CD4-positive, alpha-beta memory T cell (primary cell): ENCODE measurements at regions of chr3 and their contacts with region 1.

Region 1: DNA sequence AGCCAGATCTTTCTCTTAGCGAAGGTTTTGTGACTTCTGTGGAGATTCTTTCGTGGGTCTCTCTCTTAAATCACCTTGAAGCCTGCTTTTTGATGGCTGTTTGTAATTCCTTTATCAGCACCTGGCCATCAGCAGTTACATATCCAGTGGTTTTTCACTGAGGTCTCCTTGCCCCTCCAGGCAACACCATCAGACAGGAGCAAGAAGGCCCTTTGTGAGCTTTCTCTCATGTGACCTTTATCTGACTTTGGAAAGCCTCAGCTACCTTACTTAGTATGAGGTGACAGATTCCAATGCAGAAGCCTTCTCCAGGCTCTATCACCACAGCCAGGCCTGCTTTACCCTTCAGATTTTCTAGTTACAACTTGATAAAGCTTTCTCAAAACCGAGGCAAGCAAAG is 30.0 kb upstream of the P3H2 start:
- DNase-seq: no peak
- H3K4me3 ChIP-seq: no peak overlapping the region
- H3K4me3 Mint-ChIP-seq: no peak overlapping the region
- H3K27ac ChIP-seq: no peak overlapping the region
- H3K27ac Mint-ChIP-seq: no peak overlapping the region
- H3K4me1 ChIP-seq: no peaks in the 10 kb centered on the region
- H3K4me1 Mint-ChIP-seq: no peaks in the 10 kb centered on the region
- H3K27me3 ChIP-seq: no peaks in the 10 kb centered on the region
- H3K27me3 Mint-ChIP-seq: peaks cover 5 to 10% of the 10 kb centered on the region in 2 donors

Region 2: DNA sequence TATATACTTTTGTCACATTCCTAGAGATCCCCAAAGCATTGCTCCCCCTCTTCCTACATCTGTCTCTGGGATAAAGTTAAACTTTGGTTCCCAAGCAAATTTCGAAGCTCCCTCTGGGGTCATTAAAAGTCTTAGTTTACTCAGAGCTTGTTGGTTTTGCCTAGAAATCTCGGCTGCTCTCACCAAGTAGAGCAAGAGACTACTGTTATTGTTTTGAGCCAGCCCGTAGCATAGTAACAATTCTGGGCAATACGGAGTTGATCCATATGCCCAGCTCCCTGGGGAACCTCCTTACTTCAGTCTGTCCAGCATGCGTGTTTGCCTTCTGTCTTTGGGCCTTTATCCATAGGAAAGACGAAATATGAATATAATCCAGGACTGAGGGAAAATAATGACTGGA is 20.0 kb before region 1 on chr3:
- CTCF ChIA-PET with region 1: no interaction called
- POLR2A ChIA-PET with region 1: no interaction called
- intact Hi-C with region 1: loop called (anchors 1 kb)
- DNase-seq: no peak
- H3K4me3 ChIP-seq: no peak overlapping the region
- H3K4me3 Mint-ChIP-seq: no peak overlapping the region
- H3K27ac ChIP-seq: no peak overlapping the region
- H3K27ac Mint-ChIP-seq: no peak overlapping the region
- H3K4me1 ChIP-seq: no peaks in the 10 kb centered on the region
- H3K4me1 Mint-ChIP-seq: peaks cover 0 to 1% (median 0%) of the 10 kb centered on the region in 4 donors
- H3K27me3 ChIP-seq: no peaks in the 10 kb centered on the region
- H3K27me3 Mint-ChIP-seq: peaks cover 12 to 15% of the 10 kb centered on the region in 2 donors

Region 3: DNA sequence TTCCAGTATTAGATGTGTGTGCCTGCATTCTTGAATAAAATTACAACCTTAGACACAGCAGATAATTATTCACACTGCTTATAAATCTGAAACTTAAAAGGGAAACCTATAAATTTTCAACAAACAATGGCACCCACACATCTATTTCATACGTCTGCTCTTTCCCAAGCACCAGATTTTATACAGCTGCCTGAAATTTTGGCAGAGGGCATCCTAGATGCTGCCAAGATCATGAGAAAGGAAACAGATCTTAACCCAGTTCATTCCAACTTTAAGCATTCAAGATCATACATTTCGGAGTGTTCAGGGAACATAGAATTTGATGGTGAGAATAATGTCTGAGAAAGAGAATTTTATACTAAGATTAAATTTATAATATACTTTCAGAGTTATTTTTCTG is 118.4 kb after region 1 on chr3:
- CTCF ChIA-PET with region 1: no interaction called
- POLR2A ChIA-PET with region 1: no interaction called
- intact Hi-C with region 1: no loop called
- DNase-seq: no peak
- H3K4me3 ChIP-seq: no peak overlapping the region
- H3K4me3 Mint-ChIP-seq: no peak overlapping the region
- H3K27ac ChIP-seq: no peak overlapping the region
- H3K27ac Mint-ChIP-seq: no peak overlapping the region
- H3K4me1 ChIP-seq: no peaks in the 10 kb centered on the region
- H3K4me1 Mint-ChIP-seq: no peaks in the 10 kb centered on the region
- H3K27me3 ChIP-seq: no peaks in the 10 kb centered on the region
- H3K27me3 Mint-ChIP-seq: no peaks in the 10 kb centered on the region